ENCODE measurements at regions of chr6 and their contacts with region 1.

Region 1: DNA sequence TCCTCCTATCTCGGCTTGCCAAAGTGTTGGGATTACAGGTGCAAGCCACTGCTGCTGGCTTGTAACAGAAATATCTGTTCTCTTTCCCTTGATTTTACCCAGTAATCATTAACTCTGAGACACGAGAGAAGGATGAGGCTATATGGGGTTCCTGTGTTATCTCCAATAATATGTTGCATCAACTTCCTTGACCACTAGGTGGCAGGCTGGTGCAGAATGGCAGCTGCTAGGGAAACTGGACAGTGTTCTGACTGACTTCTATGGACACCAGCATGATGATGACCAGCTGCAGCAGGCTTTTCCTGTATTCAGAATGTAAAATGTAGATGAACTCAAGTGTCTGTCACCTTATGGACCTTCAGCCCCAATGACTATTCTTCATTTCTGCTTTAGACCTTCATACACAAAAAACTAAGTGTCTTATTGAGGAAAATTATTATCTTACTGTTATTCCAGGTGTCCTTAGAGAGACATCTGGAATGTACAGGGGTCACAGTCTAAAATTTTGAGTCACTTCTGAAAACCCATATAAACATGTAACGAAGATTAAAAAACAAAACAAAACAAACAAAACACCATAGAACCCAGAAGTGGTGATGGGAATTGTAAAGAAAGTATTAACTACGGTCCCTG is 20.4 kb upstream of the CD109 start:
- DNase-seq: peak; percentile 83
- H3K4me3 Mint-ChIP-seq: no peak overlapping the region
- H3K27ac Mint-ChIP-seq: no peak overlapping the region
- H3K4me1 Mint-ChIP-seq: no peaks in the 10 kb centered on the region
- H3K27me3 Mint-ChIP-seq: peaks cover 7% of the 10 kb centered on the region

Region 2: DNA sequence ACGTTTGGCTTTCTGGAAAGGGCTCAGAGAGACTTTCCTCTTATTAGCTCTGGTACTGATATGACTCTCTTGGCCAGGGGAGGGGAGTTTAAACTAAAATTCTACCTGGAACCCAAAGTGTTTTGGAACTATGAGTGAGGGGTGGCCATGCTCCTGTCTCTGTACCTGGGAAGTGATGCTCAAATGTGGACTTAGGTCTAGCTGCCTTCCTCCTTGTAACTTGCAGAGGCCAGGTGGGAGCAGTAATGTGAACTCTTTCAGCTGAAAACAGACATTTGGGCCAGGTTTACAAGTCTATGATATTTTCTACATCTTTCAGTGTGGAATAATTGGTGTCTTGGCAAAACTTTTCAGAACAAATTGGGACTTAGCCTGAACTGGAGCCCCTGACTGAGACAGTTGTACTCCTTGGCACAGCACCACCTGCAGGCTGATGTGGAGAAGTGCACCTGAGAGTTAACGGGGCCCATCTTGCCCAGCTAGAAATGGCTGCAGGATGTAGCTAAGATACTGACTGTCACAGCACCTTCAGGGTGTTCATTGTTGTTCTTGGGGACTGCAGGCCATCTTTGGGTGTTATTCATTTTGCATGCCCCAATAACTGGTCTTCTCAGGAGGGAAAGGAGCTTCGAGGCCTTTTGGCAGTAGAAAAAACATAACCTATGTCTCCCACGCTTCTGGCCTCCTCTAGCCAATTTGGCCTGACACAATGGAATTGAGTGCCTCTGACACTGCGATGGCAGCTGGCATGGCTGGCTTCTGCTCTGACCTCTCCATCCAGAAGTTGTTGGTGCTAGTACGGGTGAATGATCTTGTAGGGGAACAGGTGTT is 57.5 kb after region 1 on chr6:
- CTCF ChIA-PET with region 1: interaction called, 12 read pairs
- POLR2A ChIA-PET with region 1: no interaction called
- DNase-seq: peak; percentile 81
- H3K4me3 Mint-ChIP-seq: no peak overlapping the region
- H3K27ac Mint-ChIP-seq: peak overlapping the region; percentile 16
- H3K4me1 Mint-ChIP-seq: peaks cover 13% of the 10 kb centered on the region
- H3K27me3 Mint-ChIP-seq: no peaks in the 10 kb centered on the region